Gastrocnemius medialis (tissue), 4 donors: ENCODE measurements at regions of chr3 and their contacts with region 1.

Region 1: DNA sequence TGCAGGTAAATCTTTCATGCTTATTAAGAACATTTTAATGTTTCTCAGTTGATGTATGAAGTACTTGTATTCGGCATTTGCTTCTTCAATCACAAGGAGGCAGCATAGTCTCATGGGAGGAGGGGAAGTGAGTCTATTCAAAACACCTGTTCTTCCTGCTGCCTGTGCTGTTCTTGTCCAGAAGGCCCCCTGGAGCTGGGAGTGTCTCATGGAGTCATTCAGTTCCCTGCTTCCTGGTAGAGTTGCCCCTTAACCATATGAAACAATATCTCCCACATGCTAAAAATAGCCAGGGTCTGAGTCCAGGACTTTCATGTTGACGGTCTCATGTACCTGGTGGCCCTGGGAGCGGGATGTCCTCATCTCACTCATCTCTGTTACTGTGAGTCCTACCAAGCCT is 15.5 kb upstream of the PPP1R2 start:
- DNase-seq: peak; percentile 91 to 94
- ATAC-seq: peak; percentile 91 to 93
- H3K4me3 ChIP-seq: no peak overlapping the region
- H3K27ac ChIP-seq: peak overlapping the region; percentile 87 to 93 (median 88)
- H3K4me1 ChIP-seq: peaks cover 23 to 37% of the 10 kb centered on the region in 2 donors
- H3K27me3 ChIP-seq: no peaks in the 10 kb centered on the region
- CTCF ChIP-seq: peak; percentile 60 to 73 (median 65)
- POLR2A ChIP-seq: peak in 1 of 2 donors; percentile 23

Region 2: DNA sequence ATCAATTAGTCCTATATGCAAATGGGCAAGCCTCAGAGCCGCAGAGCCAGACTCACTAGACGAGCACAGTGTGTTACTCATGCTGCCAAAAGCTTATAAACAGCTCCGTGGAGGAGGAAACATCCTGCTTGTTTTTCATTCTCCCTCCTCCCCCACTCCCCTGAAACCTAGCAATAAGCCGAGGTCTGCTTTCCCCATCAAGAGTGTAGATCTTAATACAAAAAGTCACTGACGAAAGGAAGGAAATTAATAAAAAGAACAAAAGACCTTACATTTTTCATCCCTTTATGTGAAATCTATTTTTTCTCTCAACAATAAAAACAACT is 376.2 kb before region 1 on chr3:
- in situ Hi-C with region 1: no loop called
- intact Hi-C with region 1: no loop called
- DNase-seq: no peak
- ATAC-seq: peak; percentile 41 to 65
- H3K4me3 ChIP-seq: no peak overlapping the region
- H3K27ac ChIP-seq: peak overlapping the region in 3 of 4 donors; percentile 67 to 70 (median 68)
- H3K4me1 ChIP-seq: peaks cover 2 to 61% of the 10 kb centered on the region in 2 donors
- H3K27me3 ChIP-seq: no peaks in the 10 kb centered on the region
- CTCF ChIP-seq: no peak
- POLR2A ChIP-seq: no peak

Region 3: GRCh38 chr3:195542698-195543499 is 15.7 kb before region 1 on chr3 and contains the start of gene PPP1R2:
- in situ Hi-C with region 1: no loop called
- intact Hi-C with region 1: loop called (anchors 1 kb)
- DNase-seq: peak; percentile 88 to 92
- ATAC-seq: peak; percentile 78 to 80
- H3K4me3 ChIP-seq: peak within 1 kb of the TSS; percentile 85 to 99 (median 91)
- H3K27ac ChIP-seq: peak within 1 kb of the TSS; percentile 95 to 99 (median 98)
- H3K4me1 ChIP-seq: peaks cover 44 to 61% of the 10 kb centered on the region in 2 donors
- H3K27me3 ChIP-seq: no peaks in the 10 kb centered on the region
- CTCF ChIP-seq: no peak
- POLR2A ChIP-seq: peak; percentile 98 to 99
- total RNA-seq, gene PPP1R2: 80.6 to 133 (median 108) TPM

Region 4: GRCh38 chr3:195574497-195575304 is 16.1 kb after region 1 on chr3:
- in situ Hi-C with region 1: no loop called
- intact Hi-C with region 1: loop called (anchors 2 kb)
- DNase-seq: peak; percentile 78 to 87
- ATAC-seq: peak; percentile 92 to 95
- H3K4me3 ChIP-seq: no peak overlapping the region
- H3K27ac ChIP-seq: peak overlapping the region; percentile 75 to 90 (median 82)
- H3K4me1 ChIP-seq: peaks cover 21 to 31% of the 10 kb centered on the region in 2 donors
- H3K27me3 ChIP-seq: no peaks in the 10 kb centered on the region
- CTCF ChIP-seq: no peak
- POLR2A ChIP-seq: no peak

Region 5: GRCh38 chr3:195596765-195597171 is 38.2 kb after region 1 on chr3:
- in situ Hi-C with region 1: no loop called
- intact Hi-C with region 1: loop called (anchors 2 kb)
- DNase-seq: no peak
- ATAC-seq: peak; percentile 32 to 38
- H3K4me3 ChIP-seq: no peak overlapping the region
- H3K27ac ChIP-seq: peak overlapping the region; percentile 36 to 73 (median 70)
- H3K4me1 ChIP-seq: peaks cover 20 to 23% of the 10 kb centered on the region in 2 donors
- H3K27me3 ChIP-seq: no peaks in the 10 kb centered on the region
- CTCF ChIP-seq: no peak
- POLR2A ChIP-seq: no peak